ENCODE measurements at regions of chr10 and their contacts with region 1.

Region 1: GRCh38 chr10:80444646-80445319 is 9.3 kb upstream of the TSPAN14 start:
- DNase-seq: peak; percentile 63 to 77
- H3K4me3 ChIP-seq: no peak overlapping the region
- H3K4me3 Mint-ChIP-seq: no peak overlapping the region
- H3K27ac Mint-ChIP-seq: no peak overlapping the region
- H3K4me1 ChIP-seq: peaks cover 57% of the 10 kb centered on the region
- H3K4me1 Mint-ChIP-seq: peaks cover 51% of the 10 kb centered on the region
- H3K27me3 ChIP-seq: no peaks in the 10 kb centered on the region
- H3K27me3 Mint-ChIP-seq: no peaks in the 10 kb centered on the region
- CTCF ChIP-seq: peak; percentile 82 to 91

Region 2: DNA sequence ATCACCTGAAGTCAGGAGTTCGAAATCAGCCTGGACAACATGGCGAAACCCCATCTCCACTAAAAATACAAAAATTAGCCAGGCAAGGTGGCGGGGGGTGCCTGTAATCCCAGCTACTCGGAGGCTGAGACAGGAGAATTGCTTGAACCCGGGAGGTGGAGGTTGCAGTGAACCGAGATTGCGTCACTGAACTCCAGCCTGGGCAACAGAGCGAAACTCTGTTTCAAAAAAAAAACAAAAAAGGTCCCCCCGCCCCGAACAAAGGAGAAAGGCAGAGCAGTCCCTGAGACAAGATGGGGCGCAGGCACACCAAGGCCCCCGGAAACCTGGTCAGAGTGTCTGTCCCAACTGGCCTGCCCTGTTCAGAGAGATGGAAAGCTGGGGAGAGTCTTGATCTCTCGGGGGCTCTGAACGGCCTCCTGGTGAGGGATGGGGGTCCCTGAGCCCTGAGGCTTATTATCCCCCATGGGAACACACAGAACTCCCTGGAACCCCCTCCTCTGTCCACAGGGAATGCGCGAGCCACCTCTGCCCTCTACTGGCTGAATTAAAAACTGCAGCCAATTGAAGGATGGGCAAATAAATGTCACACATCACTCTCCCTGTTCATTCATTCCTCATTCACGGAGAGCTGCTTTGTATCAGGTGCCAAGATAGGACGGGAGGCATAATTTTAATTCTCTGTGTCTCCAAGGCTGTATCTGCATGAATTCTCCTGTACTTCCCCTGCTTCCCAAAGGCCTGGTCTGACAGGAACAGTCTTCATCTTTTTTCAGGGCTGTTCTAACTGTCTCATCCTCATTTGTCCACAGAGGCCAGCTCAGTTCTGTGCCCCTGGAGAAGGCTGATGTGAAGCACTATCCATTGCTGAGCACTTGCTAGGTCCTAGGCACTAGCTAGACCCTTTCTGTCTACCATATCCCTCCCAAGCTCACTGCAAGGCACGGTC is 184.2 kb before region 1 on chr10:
- CTCF ChIA-PET with region 1: no interaction called
- POLR2A ChIA-PET with region 1: no interaction called
- intact Hi-C with region 1: loop called (anchors 2 kb)
- DNase-seq: peak in 1 of 2 experiments; percentile 68
- H3K4me3 ChIP-seq: no peak overlapping the region
- H3K4me3 Mint-ChIP-seq: no peak overlapping the region
- H3K27ac Mint-ChIP-seq: no peak overlapping the region
- H3K4me1 ChIP-seq: peaks cover 10% of the 10 kb centered on the region; the same call in 1 of the 2 replicates
- H3K4me1 Mint-ChIP-seq: peaks cover 4% of the 10 kb centered on the region
- H3K27me3 ChIP-seq: no peaks in the 10 kb centered on the region
- H3K27me3 Mint-ChIP-seq: no peaks in the 10 kb centered on the region
- CTCF ChIP-seq: peak; percentile 67 to 85

Region 3: GRCh38 chr10:80408242-80409101 is 36.3 kb before region 1 on chr10 and contains the start of gene PRXL2A:
- CTCF ChIA-PET with region 1: interaction called, 10 read pairs
- POLR2A ChIA-PET with region 1: no interaction called
- intact Hi-C with region 1: no loop called
- DNase-seq: peak; percentile 92 to 96
- H3K4me3 ChIP-seq: peak within 1 kb of the TSS; percentile 92
- H3K4me3 Mint-ChIP-seq: peak within 1 kb of the TSS; percentile 95
- H3K27ac Mint-ChIP-seq: peak within 1 kb of the TSS; percentile 93
- H3K4me1 ChIP-seq: peaks cover 19% of the 10 kb centered on the region; the same call in 1 of the 2 replicates
- H3K4me1 Mint-ChIP-seq: peaks cover 25% of the 10 kb centered on the region
- H3K27me3 ChIP-seq: no peaks in the 10 kb centered on the region
- H3K27me3 Mint-ChIP-seq: no peaks in the 10 kb centered on the region
- CTCF ChIP-seq: peak in 1 of 2 experiments; percentile 0
- total RNA-seq, gene PRXL2A: 82.0 and 88.6 TPM in 2 replicates

Region 4: GRCh38 chr10:80504158-80504811 is 59.5 kb after region 1 on chr10:
- CTCF ChIA-PET with region 1: interaction called, 60 read pairs
- POLR2A ChIA-PET with region 1: interaction called, 8 read pairs
- intact Hi-C with region 1: loop called (anchors 1 kb)
- DNase-seq: peak; percentile 73 to 90
- H3K4me3 ChIP-seq: no peak overlapping the region; the same call in 1 of the 2 replicates
- H3K4me3 Mint-ChIP-seq: peak overlapping the region; percentile 66
- H3K27ac Mint-ChIP-seq: peak overlapping the region; percentile 87
- H3K4me1 ChIP-seq: peaks cover 96% of the 10 kb centered on the region
- H3K4me1 Mint-ChIP-seq: peaks cover 73% of the 10 kb centered on the region
- H3K27me3 ChIP-seq: no peaks in the 10 kb centered on the region
- H3K27me3 Mint-ChIP-seq: no peaks in the 10 kb centered on the region
- CTCF ChIP-seq: no peak

Region 5: DNA sequence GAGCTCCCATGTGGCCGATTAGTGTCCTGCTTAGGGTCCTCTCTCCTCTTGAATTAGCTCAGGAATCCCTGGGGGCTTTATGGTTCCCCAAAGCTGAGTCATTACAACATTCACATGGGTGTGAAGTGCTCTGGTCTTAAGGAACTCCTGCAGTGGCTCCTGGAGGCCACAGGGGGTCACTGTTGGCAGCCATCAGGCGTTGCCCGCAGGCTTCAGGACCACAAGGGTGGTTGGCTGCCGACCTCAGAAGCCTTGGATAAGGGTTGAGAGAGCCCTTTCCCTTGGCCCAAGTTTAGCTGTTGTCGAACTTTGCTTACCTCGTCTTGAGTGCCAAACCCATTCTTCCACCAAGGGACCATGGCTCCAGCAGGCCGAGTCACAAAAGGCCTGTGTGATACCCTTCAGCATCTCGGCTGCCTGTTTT is 154.7 kb after region 1 on chr10:
- CTCF ChIA-PET with region 1: interaction called, 10 read pairs
- POLR2A ChIA-PET with region 1: no interaction called
- intact Hi-C with region 1: loop called (anchors 5 kb)
- DNase-seq: peak; percentile 44 to 45
- H3K4me3 ChIP-seq: no peak overlapping the region
- H3K4me3 Mint-ChIP-seq: no peak overlapping the region
- H3K27ac Mint-ChIP-seq: no peak overlapping the region
- H3K4me1 ChIP-seq: no peaks in the 10 kb centered on the region
- H3K4me1 Mint-ChIP-seq: no peaks in the 10 kb centered on the region
- H3K27me3 ChIP-seq: no peaks in the 10 kb centered on the region
- H3K27me3 Mint-ChIP-seq: no peaks in the 10 kb centered on the region
- CTCF ChIP-seq: peak; percentile 68 to 70

Region 6: DNA sequence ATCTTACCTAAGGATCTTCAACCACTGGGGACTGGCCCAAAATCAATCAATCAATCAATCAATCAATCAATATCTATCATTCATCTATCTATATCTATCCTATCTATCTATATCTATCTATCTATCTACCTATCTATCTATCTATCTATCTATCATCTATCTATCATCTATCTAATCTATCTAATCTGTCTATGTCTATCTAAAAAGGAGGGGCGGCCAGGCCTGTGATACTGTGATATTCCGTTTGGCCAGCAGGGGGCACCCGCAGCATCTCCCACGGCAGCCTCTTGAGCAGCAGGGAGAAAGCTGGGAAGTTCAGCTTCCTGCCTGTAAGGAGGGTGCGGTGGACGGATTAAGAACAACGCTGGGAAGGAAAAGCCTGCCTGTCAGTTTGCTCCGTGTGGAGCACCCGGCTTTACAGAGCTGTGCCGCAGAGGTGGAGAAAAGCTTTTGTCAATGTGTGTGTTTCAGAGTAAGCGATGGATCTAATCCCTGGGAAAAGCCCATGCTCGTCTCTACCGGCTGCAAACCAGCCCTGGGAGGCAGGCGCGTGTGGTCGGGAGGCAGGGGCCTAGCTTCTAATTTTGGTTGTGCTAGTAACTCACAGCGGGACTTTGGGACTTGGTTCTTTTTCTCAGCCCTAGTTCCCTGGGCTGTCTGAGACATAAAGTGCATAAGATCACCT is 217.9 kb after region 1 on chr10:
- CTCF ChIA-PET with region 1: interaction called, 4 read pairs
- POLR2A ChIA-PET with region 1: no interaction called
- intact Hi-C with region 1: loop called (anchors 1 kb)
- DNase-seq: peak; percentile 83 to 87
- H3K4me3 ChIP-seq: no peak overlapping the region
- H3K4me3 Mint-ChIP-seq: peak overlapping the region; percentile 24
- H3K27ac Mint-ChIP-seq: no peak overlapping the region
- H3K4me1 ChIP-seq: peaks cover 9% of the 10 kb centered on the region
- H3K4me1 Mint-ChIP-seq: peaks cover 7% of the 10 kb centered on the region
- H3K27me3 ChIP-seq: no peaks in the 10 kb centered on the region
- H3K27me3 Mint-ChIP-seq: no peaks in the 10 kb centered on the region
- CTCF ChIP-seq: peak; percentile 86 to 89

Region 7: DNA sequence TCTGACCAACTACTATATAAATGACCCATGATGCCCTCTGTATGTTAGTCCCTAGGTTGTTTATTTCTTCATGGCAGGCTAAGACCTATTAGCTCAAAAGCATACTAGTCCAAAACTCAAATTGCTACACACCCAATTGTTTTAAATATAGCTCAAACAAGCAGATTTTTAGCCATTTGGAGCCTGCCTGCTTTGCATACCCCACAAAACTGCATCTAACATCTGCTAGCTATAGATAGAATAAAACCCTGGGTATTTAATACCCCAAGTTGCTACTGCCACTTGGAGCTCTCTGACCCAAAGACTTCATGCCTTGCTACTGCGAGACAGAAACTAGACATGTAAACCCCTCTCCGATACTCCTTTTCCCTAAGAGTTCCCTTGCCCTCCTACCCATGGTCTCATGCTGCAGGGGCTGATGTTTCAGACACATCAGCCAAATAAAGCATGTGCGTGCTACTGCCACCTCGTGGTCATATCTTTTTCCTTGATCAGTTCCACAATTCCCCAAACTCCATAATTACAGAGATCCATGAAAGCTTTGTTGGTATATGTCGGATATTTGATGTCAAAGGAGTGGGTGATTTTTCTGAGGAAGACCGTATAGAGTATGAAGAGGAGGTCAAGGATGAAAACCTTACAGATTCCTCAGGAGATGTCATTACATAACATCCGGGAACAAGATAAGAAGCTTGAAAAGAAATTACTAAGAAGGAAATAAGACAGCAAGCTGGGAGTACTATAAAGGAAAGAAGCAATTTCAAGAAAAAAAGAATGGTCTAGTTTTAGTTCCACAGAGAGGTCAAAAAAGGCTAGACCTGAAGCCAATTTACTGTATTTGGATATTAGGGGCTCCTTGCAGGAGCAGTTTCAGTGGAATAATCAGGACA is 479.5 kb after region 1 on chr10:
- CTCF ChIA-PET with region 1: no interaction called
- POLR2A ChIA-PET with region 1: no interaction called
- intact Hi-C with region 1: loop called (anchors 1 kb)
- DNase-seq: peak; percentile 46 to 66
- H3K4me3 ChIP-seq: no peak overlapping the region
- H3K4me3 Mint-ChIP-seq: no peak overlapping the region
- H3K27ac Mint-ChIP-seq: no peak overlapping the region
- H3K4me1 ChIP-seq: no peaks in the 10 kb centered on the region
- H3K4me1 Mint-ChIP-seq: no peaks in the 10 kb centered on the region
- H3K27me3 ChIP-seq: no peaks in the 10 kb centered on the region
- H3K27me3 Mint-ChIP-seq: peaks cover 14% of the 10 kb centered on the region
- CTCF ChIP-seq: peak; percentile 52 to 75

Measured in Caco-2 (cell line).